ENCODE measurements at regions of chr13 and their contacts with region 1.

Region 1: GRCh38 chr13:30865123-30866049 is 40.7 kb upstream of the MEDAG start:
- DNase-seq: peak; percentile 86
- ATAC-seq: peak; percentile 87

Region 2: DNA sequence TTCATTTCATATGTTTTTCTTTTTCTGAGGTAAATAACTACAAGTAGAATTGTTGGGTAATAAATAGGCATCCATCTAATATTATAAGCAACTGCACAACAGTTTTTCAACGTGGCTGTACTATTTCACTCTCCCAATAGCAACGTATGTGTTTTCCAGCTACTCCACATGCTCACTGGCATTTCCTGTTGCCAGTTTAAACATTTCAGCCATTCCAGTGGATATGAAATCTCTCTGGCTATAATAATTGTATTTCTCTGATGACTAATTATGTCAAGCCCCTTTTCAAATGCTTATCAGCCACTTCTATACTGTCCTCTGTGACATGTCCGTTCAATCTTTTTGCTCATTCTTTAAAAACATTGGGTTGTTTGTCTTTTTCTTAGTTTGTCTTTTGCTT is 156.8 kb before region 1 on chr13:
- intact Hi-C with region 1: no loop called
- DNase-seq: no peak
- ATAC-seq: no peak

Region 3: DNA sequence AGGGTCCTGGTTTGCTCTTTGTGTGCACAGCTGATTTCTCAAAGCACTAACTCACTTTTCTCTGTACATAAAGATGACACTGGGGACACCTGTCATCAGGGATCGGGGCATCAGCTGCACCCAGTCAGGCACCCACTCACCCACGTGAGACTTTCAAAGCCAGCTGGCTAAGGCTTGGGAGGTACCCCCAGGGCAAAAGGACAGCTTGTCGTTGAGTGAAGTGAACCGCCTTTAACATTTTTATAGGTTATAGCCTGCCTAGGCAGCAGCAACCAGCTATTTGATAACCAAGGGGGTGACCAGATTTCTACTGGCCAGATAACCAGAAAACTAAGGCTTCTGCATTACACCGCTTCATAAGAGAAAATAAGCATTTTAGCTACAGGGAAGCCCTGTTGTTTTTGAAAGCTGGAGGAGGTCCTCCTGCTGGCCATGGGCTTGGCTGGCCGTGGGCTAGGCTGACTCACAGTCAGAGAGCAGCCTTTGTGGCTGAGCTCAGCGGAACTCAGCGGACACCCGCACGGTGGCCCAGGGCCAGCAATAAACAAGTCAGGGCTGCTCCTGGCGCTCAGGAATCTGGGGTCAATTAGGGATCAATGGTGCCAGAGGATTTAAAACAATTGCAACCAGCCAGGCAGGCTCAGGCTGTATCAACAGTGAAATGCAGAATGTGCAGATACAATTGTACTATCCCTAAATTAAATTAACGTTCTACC is 72.9 kb before region 1 on chr13:
- intact Hi-C with region 1: no loop called
- DNase-seq: peak; percentile 87
- ATAC-seq: peak; percentile 88

Region 4: GRCh38 chr13:31044377-31045285 is 179.2 kb after region 1 on chr13:
- intact Hi-C with region 1: loop called (anchors 10 kb)
- DNase-seq: peak; percentile 85
- ATAC-seq: peak; percentile 91

Region 5: DNA sequence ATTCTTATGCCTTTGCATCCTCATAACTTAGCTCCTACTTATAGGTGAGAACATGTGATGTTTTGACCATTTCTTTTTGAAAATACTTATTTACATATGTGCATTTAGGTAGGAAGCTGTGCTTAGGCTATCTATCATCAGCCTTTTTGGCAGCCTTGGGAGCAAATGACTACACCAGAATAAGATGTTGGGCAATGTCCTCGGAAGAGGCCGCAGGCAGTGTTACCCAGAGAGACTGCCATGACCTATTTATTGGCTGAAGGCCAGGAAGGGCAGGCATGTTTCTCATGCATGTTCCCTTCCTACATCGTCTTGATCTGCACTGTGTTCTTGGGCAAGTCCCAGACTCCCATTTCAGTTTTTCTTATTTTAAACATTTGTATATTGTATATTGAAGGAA is 456.6 kb after region 1 on chr13:
- intact Hi-C with region 1: no loop called
- DNase-seq: peak; percentile 53
- ATAC-seq: peak; percentile 87